ENCODE measurements at regions of chr5 and their contacts with region 1.

Region 1: DNA sequence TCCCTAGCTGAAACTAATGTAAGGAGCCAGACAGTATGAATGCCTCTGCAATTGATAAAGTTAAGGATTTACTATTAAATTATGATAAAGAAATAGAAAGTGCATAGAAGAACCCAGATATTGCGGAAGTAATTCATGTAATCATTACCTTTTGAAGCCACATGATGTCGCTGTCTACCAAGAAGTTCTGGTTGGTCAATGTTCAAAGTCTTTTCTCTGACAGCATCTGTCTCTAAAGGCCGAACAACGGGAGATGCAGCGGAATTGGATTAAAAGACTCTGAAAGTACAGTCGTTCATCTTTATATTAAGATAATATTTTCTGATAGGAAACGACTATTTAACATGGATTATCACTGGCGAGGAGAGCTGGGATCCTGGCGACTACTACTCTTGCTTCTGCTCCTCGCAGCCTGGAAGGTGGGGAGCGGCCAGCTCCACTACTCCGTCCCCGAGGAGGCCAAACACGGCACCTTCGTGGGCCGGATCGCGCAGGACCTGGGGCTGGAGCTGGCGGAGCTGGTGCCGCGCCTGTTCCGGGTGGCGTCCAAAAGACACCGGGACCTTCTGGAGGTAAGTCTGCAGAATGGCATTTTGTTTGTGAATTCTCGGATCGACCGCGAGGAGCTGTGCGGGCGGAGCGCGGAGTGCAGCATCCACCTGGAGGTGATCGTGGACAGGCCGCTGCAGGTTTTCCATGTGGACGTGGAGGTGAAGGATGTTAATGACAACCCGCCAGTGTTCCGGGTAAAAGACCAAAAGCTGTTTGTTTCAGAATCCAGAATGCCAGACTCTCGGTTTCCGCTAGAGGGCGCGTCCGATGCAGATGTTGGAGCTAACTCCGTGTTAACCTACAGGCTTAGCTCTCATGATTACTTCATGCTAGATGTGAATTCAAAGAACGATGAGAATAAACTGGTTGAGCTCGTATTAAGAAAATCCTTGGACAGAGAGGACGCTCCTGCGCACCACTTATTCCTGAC is at the start of gene PCDHA8:
- DNase-seq: peak; percentile 76
- ATAC-seq: peak; percentile 85
- H3K4me3 Mint-ChIP-seq: peak within 1 kb of the TSS; percentile 49
- H3K27ac Mint-ChIP-seq: no peak within 1 kb of the TSS
- H3K4me1 Mint-ChIP-seq: peaks cover 7% of the 10 kb centered on the region; the same call in 1 of the 2 replicates
- H3K27me3 Mint-ChIP-seq: no peaks in the 10 kb centered on the region; the same call in 1 of the 2 replicates
- CTCF ChIP-seq: peak; percentile 65
- total RNA-seq, gene PCDHA8: 0.85 to 1.3 TPM (median 1.3 TPM) in 3 replicates

Region 2: DNA sequence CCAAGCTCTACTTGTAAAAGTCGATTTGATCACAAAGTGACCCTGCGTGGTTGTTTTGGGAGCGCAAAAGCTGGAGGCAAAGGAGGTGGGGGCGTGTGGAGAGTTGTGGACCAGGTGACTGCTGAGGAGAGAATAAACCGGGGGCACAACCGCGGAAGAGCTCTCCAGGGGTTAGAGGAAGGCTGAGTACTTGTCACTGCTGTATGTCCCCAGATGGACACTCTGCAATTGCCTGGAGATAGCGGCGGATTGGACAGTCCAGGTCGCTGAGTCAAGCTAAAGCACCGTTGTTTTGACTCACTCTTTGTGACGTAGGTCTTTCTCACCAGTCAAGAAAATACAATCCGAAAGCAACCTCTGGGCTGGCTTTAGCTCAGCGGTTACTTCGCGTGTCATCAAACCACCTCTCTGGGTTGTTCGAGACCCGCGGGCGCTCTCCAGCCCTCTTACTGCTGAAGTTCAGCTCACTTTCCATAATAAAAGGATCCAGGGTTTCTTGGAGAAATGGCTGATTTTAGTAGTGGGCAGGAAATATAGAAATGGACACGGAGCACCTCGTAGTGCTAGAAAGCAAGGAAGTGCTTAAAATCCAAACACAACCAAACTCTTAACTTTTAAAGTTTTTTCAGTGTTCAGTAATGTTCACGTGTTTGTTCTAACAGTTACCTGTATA is 115.3 kb before region 1 on chr5:
- CTCF ChIA-PET with region 1: interaction called, 10 read pairs
- POLR2A ChIA-PET with region 1: no interaction called
- DNase-seq: peak; percentile 80
- ATAC-seq: peak; percentile 95
- H3K4me3 Mint-ChIP-seq: peak overlapping the region; percentile 91
- H3K27ac Mint-ChIP-seq: no peak overlapping the region
- H3K4me1 Mint-ChIP-seq: peaks cover 4% of the 10 kb centered on the region; the same call in 1 of the 2 replicates
- H3K27me3 Mint-ChIP-seq: peaks cover 13% of the 10 kb centered on the region
- CTCF ChIP-seq: no peak

Region 3: DNA sequence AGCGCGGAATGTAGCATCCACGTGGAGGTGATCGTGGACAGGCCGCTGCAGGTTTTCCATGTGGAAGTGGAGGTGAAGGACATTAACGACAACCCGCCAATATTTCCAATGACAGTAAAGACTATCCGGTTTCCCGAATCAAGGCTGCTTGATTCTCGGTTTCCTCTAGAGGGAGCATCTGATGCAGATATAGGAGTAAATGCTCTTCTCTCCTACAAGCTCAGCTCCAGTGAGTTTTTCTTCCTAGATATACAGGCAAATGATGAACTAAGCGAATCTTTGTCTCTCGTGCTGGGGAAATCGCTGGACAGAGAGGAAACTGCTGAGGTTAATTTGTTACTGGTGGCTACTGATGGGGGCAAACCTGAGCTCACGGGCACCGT is 46.0 kb before region 1 on chr5:
- CTCF ChIA-PET with region 1: interaction called, 28 read pairs
- POLR2A ChIA-PET with region 1: no interaction called
- DNase-seq: no peak
- ATAC-seq: peak; percentile 88
- H3K4me3 Mint-ChIP-seq: peak overlapping the region; percentile 87
- H3K27ac Mint-ChIP-seq: 0 out of 2 replicates have a peak overlapping the region, but pooled peaks have one; percentile 27
- H3K4me1 Mint-ChIP-seq: peaks cover 4% of the 10 kb centered on the region; the same call in 1 of the 2 replicates
- H3K27me3 Mint-ChIP-seq: no peaks in the 10 kb centered on the region
- CTCF ChIP-seq: no peak

Region 4: GRCh38 chr5:140821375-140822280 is 19.6 kb before region 1 on chr5 and contains the start of gene PCDHA5:
- CTCF ChIA-PET with region 1: interaction called, 14 read pairs
- POLR2A ChIA-PET with region 1: no interaction called
- DNase-seq: no peak
- ATAC-seq: no peak
- H3K4me3 Mint-ChIP-seq: peak within 1 kb of the TSS; percentile 30; the same call in 1 of the 2 replicates
- H3K27ac Mint-ChIP-seq: no peak within 1 kb of the TSS
- H3K4me1 Mint-ChIP-seq: no peaks in the 10 kb centered on the region
- H3K27me3 Mint-ChIP-seq: no peaks in the 10 kb centered on the region
- CTCF ChIP-seq: no peak
- total RNA-seq, gene PCDHA5: 0.85 to 0.94 TPM (median 0.90 TPM) in 3 replicates

Region 5: DNA sequence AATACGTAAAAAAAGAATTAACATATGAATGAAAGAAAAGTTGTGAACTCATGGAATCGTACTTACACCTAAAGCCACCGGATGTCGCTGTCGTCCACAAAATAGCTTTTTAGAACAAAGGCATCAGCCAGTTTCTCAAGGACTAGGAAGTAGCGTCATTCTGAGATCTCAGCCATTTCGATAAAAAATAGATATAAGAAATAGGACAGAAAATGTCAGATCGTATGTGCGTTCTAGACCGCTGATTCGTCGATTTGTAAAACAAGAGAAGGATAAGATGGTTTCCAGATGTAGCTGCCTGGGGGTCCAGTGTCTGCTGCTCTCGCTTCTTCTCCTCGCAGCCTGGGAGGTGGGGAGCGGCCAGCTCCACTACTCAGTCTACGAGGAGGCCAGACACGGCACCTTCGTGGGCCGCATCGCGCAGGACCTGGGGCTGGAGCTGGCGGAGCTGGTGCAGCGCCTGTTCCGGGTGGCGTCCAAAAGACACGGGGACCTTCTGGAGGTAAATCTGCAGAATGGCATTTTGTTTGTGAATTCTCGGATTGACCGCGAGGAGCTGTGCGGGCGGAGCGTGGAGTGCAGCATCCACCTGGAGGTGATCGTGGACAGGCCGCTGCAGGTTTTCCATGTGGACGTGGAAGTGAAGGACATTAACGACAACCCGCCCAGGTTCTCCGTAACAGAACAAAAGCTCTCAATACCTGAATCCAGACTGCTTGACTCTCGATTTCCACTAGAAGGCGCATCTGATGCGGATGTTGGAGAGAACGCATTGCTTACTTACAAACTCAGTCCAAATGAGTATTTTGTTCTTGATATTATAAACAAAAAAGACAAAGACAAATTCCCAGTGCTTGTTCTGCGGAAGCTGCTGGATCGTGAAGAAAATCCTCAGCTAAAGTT is 14.8 kb after region 1 on chr5 and contains the start of gene PCDHA10:
- CTCF ChIA-PET with region 1: interaction called, 61 read pairs
- POLR2A ChIA-PET with region 1: no interaction called
- DNase-seq: peak; percentile 48
- ATAC-seq: peak; percentile 84
- H3K4me3 Mint-ChIP-seq: peak within 1 kb of the TSS; percentile 92
- H3K27ac Mint-ChIP-seq: peak within 1 kb of the TSS; percentile 78
- H3K4me1 Mint-ChIP-seq: peaks cover 23% of the 10 kb centered on the region
- H3K27me3 Mint-ChIP-seq: no peaks in the 10 kb centered on the region
- CTCF ChIP-seq: peak; percentile 36
- total RNA-seq, gene PCDHA10: 10.8 to 12.0 TPM (median 11.6 TPM) in 3 replicates

Region 6: GRCh38 chr5:140868721-140869554 is 27.7 kb after region 1 on chr5 and contains the start of gene PCDHA11:
- CTCF ChIA-PET with region 1: interaction called, 19 read pairs
- POLR2A ChIA-PET with region 1: no interaction called
- DNase-seq: no peak
- ATAC-seq: peak; percentile 93
- H3K4me3 Mint-ChIP-seq: peak within 1 kb of the TSS; percentile 88
- H3K27ac Mint-ChIP-seq: peak within 1 kb of the TSS; percentile 78
- H3K4me1 Mint-ChIP-seq: peaks cover 16% of the 10 kb centered on the region
- H3K27me3 Mint-ChIP-seq: no peaks in the 10 kb centered on the region
- CTCF ChIP-seq: no peak
- total RNA-seq, gene PCDHA11: 5.8 to 8.7 TPM (median 7.9 TPM) in 3 replicates

Region 7: DNA sequence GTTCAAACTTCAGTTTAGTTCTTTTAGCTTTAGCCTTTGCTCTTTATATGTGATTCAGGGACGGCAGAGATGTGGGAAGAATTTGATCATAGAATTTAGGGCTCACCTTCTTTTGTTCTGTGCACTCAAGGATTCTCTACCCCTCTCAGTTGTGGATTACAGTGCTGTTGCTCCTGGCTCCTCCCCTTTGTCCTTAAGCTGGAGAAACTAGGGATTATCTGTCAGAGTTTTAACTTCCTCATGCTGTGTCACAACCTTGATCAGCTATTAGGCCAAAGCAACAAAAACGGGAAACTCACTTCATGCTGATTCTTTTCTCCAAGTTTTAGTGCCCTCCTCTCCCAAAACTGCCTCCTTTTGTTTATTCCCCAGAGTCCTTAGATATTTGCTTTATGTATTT is 112.0 kb after region 1 on chr5:
- CTCF ChIA-PET with region 1: no interaction called
- POLR2A ChIA-PET with region 1: no interaction called
- DNase-seq: no peak
- ATAC-seq: peak; percentile 77
- H3K4me3 Mint-ChIP-seq: no peak overlapping the region
- H3K27ac Mint-ChIP-seq: peak overlapping the region; percentile 26; the same call in 1 of the 2 replicates
- H3K4me1 Mint-ChIP-seq: peaks cover 12% of the 10 kb centered on the region
- H3K27me3 Mint-ChIP-seq: no peaks in the 10 kb centered on the region
- CTCF ChIP-seq: no peak

Region 8: DNA sequence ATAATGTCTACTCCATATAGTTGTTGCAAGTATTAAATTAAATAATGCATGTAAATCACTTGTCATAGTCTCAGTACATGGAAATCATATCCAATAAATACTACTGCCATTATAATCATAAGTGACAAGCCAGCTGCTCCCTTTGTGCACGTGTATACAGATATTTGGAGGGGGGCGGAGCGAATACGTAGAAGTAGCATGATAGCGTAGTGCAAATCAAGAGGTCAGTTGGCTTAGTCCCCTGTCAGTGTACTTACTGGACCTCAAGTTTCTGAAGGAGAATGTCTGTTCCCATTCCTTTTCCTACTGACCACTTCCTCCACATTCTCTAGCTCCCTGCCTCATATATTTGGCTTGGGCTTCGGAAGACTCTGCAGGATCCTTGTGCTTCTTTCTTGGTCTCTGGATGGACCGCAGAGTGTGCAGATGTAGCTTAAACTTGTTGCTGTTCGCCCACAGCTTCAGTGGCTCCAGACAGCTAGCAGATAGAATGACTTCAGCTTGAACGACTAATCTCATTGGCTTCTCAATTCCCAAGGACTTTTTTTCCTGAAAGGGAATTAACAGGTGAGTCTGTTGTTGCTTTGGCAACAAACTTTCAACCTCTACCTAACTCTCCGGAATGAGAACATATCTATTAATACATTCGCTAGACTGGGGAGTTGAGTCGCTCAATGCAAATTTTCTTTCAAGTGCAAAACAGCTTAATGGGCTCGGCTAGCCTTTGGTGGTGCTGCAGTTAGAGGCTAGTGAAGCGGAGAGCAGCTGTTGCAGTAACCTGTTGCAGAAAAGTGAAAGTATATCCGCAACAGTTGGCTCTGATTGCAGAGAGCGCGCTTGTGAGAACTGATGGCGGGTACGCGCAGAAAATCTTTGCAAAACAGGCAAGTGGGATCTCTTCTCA is 209.6 kb after region 1 on chr5 and contains the start of gene PCDHB1:
- CTCF ChIA-PET with region 1: interaction called, 26 read pairs
- POLR2A ChIA-PET with region 1: no interaction called
- DNase-seq: peak; percentile 26
- ATAC-seq: peak; percentile 80
- H3K4me3 Mint-ChIP-seq: peak within 1 kb of the TSS; percentile 82
- H3K27ac Mint-ChIP-seq: peak within 1 kb of the TSS; percentile 73
- H3K4me1 Mint-ChIP-seq: peaks cover 13% of the 10 kb centered on the region
- H3K27me3 Mint-ChIP-seq: peaks cover 45% of the 10 kb centered on the region
- CTCF ChIP-seq: no peak
- total RNA-seq, gene PCDHB1: 0.09 to 0.13 TPM (median 0.11 TPM) in 3 replicates

Region 9: DNA sequence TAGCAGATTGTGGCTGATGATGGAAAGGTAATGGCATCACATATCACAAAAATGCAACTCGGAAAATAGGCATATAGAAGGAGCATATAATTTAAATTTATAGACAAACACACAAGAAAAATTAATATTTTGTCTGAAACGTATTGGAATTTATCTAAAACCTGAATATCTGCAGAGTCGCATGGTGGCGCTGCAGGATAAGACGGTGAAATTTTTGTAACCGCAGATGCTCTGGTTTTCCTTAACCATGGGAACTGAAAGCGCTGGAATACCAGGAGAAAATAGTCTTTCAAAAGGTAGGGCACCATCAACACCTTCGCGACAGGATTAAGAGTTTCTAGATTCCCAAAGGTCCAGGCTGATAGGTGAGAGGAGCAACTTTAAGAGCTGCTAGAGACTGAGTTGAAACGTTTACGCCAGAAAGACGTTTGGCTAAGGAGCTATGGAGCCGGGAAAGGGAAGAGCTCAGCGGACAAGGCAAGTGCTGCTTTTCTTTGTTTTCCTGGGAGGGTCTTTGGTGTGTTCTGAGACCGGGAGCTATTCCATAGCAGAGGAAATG is 392.9 kb after region 1 on chr5:
- CTCF ChIA-PET with region 1: no interaction called
- POLR2A ChIA-PET with region 1: no interaction called
- DNase-seq: peak; percentile 47
- ATAC-seq: peak; percentile 64
- H3K4me3 Mint-ChIP-seq: peak overlapping the region; percentile 69
- H3K27ac Mint-ChIP-seq: no peak overlapping the region
- H3K4me1 Mint-ChIP-seq: peaks cover 5% of the 10 kb centered on the region
- H3K27me3 Mint-ChIP-seq: peaks cover 3% of the 10 kb centered on the region; the same call in 1 of the 2 replicates
- CTCF ChIP-seq: peak; percentile 45

Measured in WTC11 (cell line).